ENCODE measurements at regions of chr5 and their contacts with region 1.

Region 1: GRCh38 chr5:138789771-138790242 is 36.6 kb downstream of the CTNNA1 start:
- DNase-seq: no peak
- H3K4me3 ChIP-seq: no peak overlapping the region
- H3K27ac ChIP-seq: no peak overlapping the region
- H3K4me1 ChIP-seq: peaks cover 0 to 4% (median 0%) of the 10 kb centered on the region in 4 experiments; a peak in 2 of 7 replicates
- H3K27me3 ChIP-seq: no peaks in the 10 kb centered on the region
- CTCF ChIP-seq: peak in 2 of 3 experiments; percentile 40 to 73; a peak in 3 of 4 replicates
- EP300 ChIP-seq: no peak
- POLR2A ChIP-seq: no peak
- RAD21 ChIP-seq: peak; percentile 27 to 45; a peak in 3 of 4 replicates

Region 2: DNA sequence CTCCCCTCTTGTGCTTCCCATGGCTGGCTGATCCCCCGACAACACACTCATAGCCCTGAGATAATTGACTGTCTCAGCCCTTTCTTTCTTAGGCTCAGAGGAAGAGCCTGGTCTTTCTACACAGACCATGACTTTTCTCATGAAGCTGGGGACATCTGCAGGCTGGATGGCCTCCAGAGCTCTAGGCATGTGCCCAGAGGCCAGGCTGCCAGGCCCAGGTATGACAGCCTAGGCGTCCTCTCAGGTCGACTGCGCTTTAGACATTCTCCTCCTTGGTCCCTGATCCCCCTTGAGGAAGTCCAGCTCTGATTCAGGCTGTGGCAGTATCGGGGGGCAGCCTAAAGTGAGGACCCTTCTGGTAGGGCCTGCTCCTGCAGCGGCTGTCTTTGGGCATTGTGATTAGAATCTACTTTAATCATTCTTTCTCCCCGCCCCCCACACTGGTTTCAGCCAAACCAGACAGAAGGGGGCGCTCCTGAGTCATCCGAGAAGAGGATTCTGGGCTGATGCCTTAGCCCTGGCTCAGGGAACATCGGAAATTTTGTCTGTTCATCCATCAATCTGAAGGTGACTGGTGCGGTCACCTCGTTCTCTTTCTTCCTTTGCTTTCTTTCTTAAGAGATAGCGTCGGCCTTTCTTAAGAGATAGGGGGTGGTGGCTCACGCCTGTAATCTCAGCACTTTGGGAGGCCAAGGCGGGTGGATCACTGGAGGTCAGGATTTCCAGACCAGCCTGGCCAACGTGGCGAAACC is 148.1 kb before region 1 on chr5:
- CTCF ChIA-PET with region 1: interaction called, 26 read pairs
- POLR2A ChIA-PET with region 1: no interaction called
- DNase-seq: peak; percentile 34 to 98
- H3K4me3 ChIP-seq: no peak overlapping the region
- H3K27ac ChIP-seq: no peak overlapping the region
- H3K4me1 ChIP-seq: peaks cover 0 to 16% (median 11%) of the 10 kb centered on the region in 4 experiments; a peak in 6 of 7 replicates
- H3K27me3 ChIP-seq: no peaks in the 10 kb centered on the region
- CTCF ChIP-seq: peak in 2 of 3 experiments; percentile 86 to 88; a peak in 3 of 4 replicates
- EP300 ChIP-seq: peak in 1 of 2 experiments; percentile 40; a peak in 1 of 3 replicates
- POLR2A ChIP-seq: no peak
- RAD21 ChIP-seq: peak; percentile 91 to 93

Region 3: GRCh38 chr5:138772986-138773594 is 16.7 kb before region 1 on chr5:
- CTCF ChIA-PET with region 1: interaction called, 37 read pairs
- POLR2A ChIA-PET with region 1: interaction called, 9 read pairs
- DNase-seq: no peak
- H3K4me3 ChIP-seq: no peak overlapping the region
- H3K27ac ChIP-seq: no peak overlapping the region
- H3K4me1 ChIP-seq: peaks cover 0 to 5% (median 1%) of the 10 kb centered on the region in 4 experiments; a peak in 3 of 7 replicates
- H3K27me3 ChIP-seq: no peaks in the 10 kb centered on the region
- CTCF ChIP-seq: no peak
- EP300 ChIP-seq: no peak
- POLR2A ChIP-seq: no peak
- RAD21 ChIP-seq: no peak

Region 4: DNA sequence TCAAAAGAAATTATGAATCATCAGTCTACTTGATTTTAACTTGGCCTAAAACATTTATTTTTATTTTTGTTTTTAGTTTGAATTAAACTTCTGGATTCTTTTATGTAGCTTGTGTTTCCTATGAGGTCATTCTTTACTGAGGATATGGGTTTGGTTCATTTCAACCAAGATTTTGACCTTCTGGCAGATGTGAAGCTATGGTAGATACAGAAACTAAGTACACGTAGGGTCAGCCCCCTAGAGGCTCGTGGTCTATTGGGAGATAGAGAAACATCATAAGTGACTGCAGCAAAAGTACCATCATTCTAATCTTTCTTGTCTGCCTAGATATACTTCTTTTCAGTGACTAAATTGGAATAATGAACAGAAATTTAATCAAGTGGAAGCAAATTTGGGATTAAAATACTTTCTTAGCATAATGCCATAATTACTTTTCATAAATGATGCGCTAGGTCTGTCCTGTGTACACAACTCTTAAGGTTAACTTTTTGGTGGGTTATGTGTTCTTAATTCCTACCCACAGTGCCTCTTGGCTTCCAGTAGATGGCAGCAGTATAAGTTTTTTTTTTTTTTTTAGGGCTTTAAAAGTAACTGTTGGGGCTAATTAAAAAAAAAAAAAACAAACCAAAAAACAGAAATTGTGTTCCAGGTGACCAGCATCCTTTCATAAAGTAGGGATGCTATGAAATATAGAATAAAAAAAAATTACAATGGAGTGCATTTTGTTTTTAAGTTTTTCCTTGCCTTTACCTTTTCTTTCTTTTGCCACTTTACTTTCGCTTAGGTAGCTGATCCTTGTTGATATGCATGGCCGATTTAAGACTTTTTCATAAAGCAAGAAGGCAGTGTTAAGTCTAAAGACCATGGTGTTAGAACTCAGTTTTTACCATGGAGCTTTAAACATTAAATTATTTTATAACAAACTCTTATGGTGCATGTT is 35.4 kb after region 1 on chr5:
- CTCF ChIA-PET with region 1: interaction called, 40 read pairs
- POLR2A ChIA-PET with region 1: no interaction called
- DNase-seq: no peak
- H3K4me3 ChIP-seq: no peak overlapping the region
- H3K27ac ChIP-seq: no peak overlapping the region
- H3K4me1 ChIP-seq: peaks cover 0 to under 1% (median 0%) of the 10 kb centered on the region in 4 experiments; a peak in 2 of 7 replicates
- H3K27me3 ChIP-seq: no peaks in the 10 kb centered on the region
- CTCF ChIP-seq: peak in 1 of 3 experiments; percentile 46; a peak in 2 of 4 replicates
- EP300 ChIP-seq: no peak
- POLR2A ChIP-seq: no peak
- RAD21 ChIP-seq: peak; percentile 20 to 38; a peak in 2 of 4 replicates

Region 5: DNA sequence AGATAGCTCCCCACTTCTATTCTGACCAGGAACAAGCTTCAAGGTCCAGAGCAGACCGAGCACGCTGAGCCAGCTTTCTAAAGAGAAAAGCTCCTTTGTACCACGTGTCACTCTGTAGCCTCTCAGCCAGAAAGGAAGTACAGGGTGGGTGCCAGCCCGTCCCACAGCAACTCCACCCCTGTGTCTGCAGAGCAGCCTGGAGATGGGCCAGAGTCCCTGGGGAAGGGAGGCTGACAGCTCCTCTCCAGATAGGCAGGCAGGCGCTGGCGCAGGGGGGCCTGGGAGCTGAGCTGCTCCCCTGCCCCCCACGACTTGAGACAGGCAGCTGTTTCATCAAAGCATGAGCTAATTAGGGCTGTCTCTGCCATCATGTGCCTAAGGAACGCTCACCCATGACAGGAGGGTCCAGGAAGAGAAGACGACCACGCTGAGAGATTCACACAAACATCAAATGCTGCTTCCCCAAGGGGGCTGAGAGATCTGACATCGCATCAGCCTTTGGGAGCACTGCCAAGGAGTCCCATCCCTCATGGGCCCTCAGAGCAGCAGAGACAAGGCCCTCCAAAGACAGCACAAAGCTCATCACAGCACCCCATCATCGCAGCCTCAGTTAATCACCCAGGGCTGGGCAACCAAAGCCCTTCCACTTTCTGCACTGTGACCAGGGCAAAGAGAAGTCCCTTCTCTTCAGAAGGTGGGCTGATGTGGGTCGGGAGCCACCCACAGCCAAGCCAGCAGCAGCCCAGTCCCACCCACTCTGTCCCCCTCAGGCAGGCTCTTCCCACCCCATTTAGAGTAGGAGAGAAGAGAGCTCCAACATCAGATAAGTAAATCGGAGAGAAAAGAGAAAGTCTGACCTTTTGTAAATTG is 163.8 kb after region 1 on chr5:
- CTCF ChIA-PET with region 1: interaction called, 11 read pairs
- POLR2A ChIA-PET with region 1: no interaction called
- DNase-seq: no peak
- H3K4me3 ChIP-seq: no peak overlapping the region
- H3K27ac ChIP-seq: no peak overlapping the region
- H3K4me1 ChIP-seq: peaks cover 0 to 7% (median 4%) of the 10 kb centered on the region in 4 experiments; a peak in 3 of 7 replicates
- H3K27me3 ChIP-seq: no peaks in the 10 kb centered on the region
- CTCF ChIP-seq: no peak
- EP300 ChIP-seq: no peak
- POLR2A ChIP-seq: no peak
- RAD21 ChIP-seq: no peak

Measured in H1 (cell line).